ENCODE measurements at regions of chr10 and their contacts with region 1.

Region 1: GRCh38 chr10:22334414-22335172 is 10.7 kb upstream of the SPAG6 start:
- DNase-seq: peak in 1 of 2 donors; percentile 21
- H3K4me3 ChIP-seq: peak overlapping the region; percentile 42 to 60
- H3K27ac ChIP-seq: no peak overlapping the region
- H3K4me1 ChIP-seq: peaks cover 0 to 31% (median 29%) of the 10 kb centered on the region in 4 donors
- H3K27me3 ChIP-seq: peaks cover 12 to 60% of the 10 kb centered on the region in 2 donors
- CTCF ChIP-seq: no peak

Region 2: GRCh38 chr10:22294695-22295094 is 39.9 kb before region 1 on chr10:
- intact Hi-C with region 1: no loop called
- DNase-seq: no peak
- H3K4me3 ChIP-seq: no peak overlapping the region
- H3K27ac ChIP-seq: no peak overlapping the region
- H3K4me1 ChIP-seq: no peaks in the 10 kb centered on the region
- H3K27me3 ChIP-seq: no peaks in the 10 kb centered on the region
- CTCF ChIP-seq: no peak

Region 3: GRCh38 chr10:22704942-22705341 is 370.3 kb after region 1 on chr10:
- intact Hi-C with region 1: loop called (anchors 5 kb)
- DNase-seq: no peak
- H3K4me3 ChIP-seq: no peak overlapping the region
- H3K27ac ChIP-seq: no peak overlapping the region
- H3K4me1 ChIP-seq: peaks cover 0 to 64% (median under 1%) of the 10 kb centered on the region in 4 donors
- H3K27me3 ChIP-seq: no peaks in the 10 kb centered on the region
- CTCF ChIP-seq: no peak

Measured in tibial artery (tissue), 4 donors.